T-cell (primary cell): ENCODE measurements at regions of chr3 and their contacts with region 1.

Region 1: DNA sequence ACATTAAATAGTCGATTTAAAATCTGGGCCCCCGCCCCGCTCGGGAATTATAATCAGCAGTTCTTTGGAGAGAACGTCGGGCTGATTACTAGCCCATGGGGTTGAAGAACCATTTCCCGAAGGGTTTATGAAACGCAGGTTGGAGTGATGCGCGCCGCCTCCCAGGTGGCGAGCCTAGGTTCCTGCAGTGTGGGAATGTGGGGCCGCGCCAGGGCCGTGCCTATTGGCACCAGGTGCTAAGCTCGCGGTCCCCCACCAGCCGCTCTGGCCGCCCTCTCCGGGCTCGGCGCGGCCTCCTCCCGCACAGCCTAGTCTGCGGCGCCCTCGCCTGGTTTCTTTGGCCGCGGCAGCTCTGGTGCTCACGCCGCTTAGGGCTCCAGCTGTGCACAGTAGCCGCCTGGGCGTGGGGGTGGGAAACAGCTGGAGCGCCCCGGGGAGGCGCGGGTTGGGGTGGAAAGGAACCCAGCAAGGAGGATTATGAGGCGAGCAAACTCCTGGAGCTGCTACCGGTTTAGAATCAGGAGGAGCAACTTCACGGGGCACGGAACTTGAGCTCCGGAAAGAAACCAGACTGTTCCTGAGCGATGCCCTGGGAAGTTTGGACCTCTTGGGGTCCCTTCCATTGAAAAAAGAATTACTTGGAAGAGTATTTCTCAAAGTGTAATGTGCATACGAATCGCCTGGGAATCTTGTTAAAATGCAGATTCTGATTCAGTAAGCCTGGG is 5.6 kb upstream of the MECOM start:
- DNase-seq: peak in 5 of 35 experiments; percentile 6 to 44 (median 23)
- ATAC-seq: peak; percentile 50 to 82 (median 58)
- H3K4me3 ChIP-seq: peak overlapping the region in 1 of 2 donors; percentile 70
- H3K4me3 Mint-ChIP-seq: peak overlapping the region; percentile 47 to 65 (median 55)
- H3K27ac ChIP-seq: no peak overlapping the region
- H3K27ac Mint-ChIP-seq: no peak overlapping the region
- H3K4me1 ChIP-seq: peaks cover 6 to 15% of the 10 kb centered on the region in 2 experiments
- H3K4me1 Mint-ChIP-seq: peaks cover 17 to 39% (median 28%) of the 10 kb centered on the region in 3 donors
- H3K27me3 ChIP-seq: peaks cover 2 to 59% of the 10 kb centered on the region in 2 experiments
- H3K27me3 Mint-ChIP-seq: peaks cover 70 to 97% of the 10 kb centered on the region in 2 donors

Region 2: DNA sequence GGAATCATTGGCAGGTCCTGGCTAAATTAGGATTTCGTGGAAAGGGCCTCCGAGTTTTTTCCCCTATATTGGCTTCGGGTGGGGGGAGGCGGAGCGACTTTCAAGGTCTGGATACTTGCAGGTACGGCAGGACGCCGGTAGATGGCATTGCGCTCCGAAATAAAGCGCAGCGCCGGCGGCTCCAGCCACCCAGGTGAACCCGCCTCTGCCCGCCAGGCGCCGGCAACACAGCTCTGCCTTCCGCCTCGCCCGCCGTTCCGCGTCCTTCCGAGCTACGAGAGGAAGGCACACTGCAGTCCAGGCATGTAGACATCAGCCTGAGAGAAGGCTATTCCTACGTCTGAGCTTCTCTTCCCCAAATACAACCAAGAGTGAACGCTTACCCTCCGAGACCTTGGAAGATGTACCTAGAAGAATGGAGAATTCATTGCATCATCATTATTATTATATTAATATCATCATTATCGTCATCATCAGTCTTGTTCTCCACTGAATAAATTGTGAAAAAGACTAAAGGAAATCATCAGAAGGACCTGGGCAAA is 519.7 kb before region 1 on chr3:
- CTCF ChIA-PET with region 1: interaction called in 1 of 2 experiments, 10 read pairs
- POLR2A ChIA-PET with region 1: no interaction called
- DNase-seq: peak; percentile 4 to 67 (median 46)
- ATAC-seq: peak; percentile 82 to 95 (median 90)
- H3K4me3 ChIP-seq: no peak overlapping the region
- H3K4me3 Mint-ChIP-seq: peak overlapping the region in 1 of 3 donors; percentile 24
- H3K27ac ChIP-seq: no peak overlapping the region
- H3K27ac Mint-ChIP-seq: no peak overlapping the region
- H3K4me1 ChIP-seq: peaks cover 15 to 24% of the 10 kb centered on the region in 2 experiments
- H3K4me1 Mint-ChIP-seq: peaks cover 28 to 30% (median 29%) of the 10 kb centered on the region in 3 donors
- H3K27me3 ChIP-seq: peaks cover 8 to 29% of the 10 kb centered on the region in 2 experiments
- H3K27me3 Mint-ChIP-seq: peaks cover 58 to 60% of the 10 kb centered on the region in 2 donors